Transverse colon (tissue), 4 donors: ENCODE measurements at regions of chr3 and their contacts with region 1.

Region 1: GRCh38 chr3:192802957-192803899 is 75.9 kb upstream of the FGF12 start:
- DNase-seq: no peak
- H3K4me3 ChIP-seq: no peak overlapping the region
- H3K27ac ChIP-seq: no peak overlapping the region
- H3K4me1 ChIP-seq: no peaks in the 10 kb centered on the region
- H3K27me3 ChIP-seq: no peaks in the 10 kb centered on the region
- CTCF ChIP-seq: peak; percentile 34 to 48 (median 41)
- EP300 ChIP-seq: no peak
- POLR2A ChIP-seq: no peak

Region 2: DNA sequence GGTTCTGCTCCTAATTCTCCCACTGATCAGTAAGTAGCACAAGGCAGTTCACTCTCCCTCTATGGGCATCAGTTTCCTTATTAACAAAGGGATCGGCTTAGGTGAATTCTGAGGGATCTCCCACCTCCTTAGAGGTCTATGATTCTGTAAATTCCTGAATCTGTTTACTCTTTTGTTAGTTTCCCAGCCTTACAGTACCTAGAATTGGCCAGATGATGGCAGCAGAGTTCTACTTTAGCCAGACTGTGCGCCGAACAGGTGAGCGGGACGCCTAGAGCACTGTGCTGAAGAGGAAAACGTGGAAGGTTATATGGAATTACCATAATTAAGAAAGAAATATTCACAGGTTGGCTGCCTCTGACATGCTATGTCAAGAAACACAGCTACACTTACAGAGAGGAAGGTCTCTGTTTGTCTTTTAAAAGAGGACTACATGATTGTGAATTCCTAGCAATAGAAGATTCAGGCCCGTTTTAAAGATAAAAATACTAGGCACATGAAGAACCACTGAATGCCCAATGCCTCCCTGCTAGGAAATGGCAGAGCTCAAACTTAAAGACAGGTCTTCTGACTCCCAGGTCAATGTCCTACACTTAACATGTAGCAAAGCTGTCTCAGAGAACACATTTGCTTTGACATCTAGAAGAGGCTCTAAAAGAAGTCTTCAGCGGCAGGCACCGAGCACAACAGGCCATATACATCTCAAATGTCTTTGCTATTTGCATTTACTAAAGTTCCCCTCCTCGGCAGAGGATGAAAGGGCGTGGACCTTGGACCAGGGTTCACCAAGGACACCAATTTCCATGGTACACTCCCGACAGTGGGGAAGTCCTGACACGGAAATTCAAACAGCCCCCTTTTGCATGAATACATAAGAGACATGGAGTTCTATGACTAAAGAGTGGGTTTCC is 335.7 kb before region 1 on chr3:
- in situ Hi-C with region 1: loop called in 1 of 4 experiments (anchors 10 kb)
- intact Hi-C with region 1: no loop called
- DNase-seq: peak; percentile 53
- H3K4me3 ChIP-seq: no peak overlapping the region
- H3K27ac ChIP-seq: no peak overlapping the region
- H3K4me1 ChIP-seq: no peaks in the 10 kb centered on the region
- H3K27me3 ChIP-seq: peaks cover 14% of the 10 kb centered on the region
- CTCF ChIP-seq: peak; percentile 60 to 90 (median 84)
- EP300 ChIP-seq: no peak
- POLR2A ChIP-seq: no peak

Region 3: GRCh38 chr3:192566706-192567290 is 236.4 kb before region 1 on chr3:
- in situ Hi-C with region 1: loop called in 3 of 4 experiments (anchors 5 to 25 kb)
- intact Hi-C with region 1: loop called (anchors 10 kb)
- DNase-seq: peak; percentile 54
- H3K4me3 ChIP-seq: no peak overlapping the region
- H3K27ac ChIP-seq: no peak overlapping the region
- H3K4me1 ChIP-seq: no peaks in the 10 kb centered on the region
- H3K27me3 ChIP-seq: no peaks in the 10 kb centered on the region
- CTCF ChIP-seq: peak; percentile 45 to 67 (median 61)
- EP300 ChIP-seq: no peak
- POLR2A ChIP-seq: no peak

Region 4: DNA sequence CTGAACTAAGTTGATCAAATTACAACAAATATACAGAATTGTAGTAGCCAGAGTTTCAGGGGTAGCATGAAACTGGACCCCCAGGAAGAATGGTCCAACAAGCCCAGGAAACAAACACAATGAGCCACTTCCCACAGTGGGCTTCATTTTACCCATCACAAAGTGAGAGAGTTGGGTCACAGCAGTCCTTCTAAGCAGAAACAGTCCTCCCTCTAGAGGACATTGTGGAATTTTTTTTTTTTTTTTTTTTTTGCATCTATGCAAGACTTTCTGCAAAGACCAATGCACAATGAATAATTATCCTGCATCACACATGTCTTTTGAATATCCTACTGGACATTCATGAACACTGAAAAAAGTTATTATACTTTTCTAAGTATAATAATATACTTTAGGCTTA is 649.1 kb after region 1 on chr3:
- in situ Hi-C with region 1: loop called in 1 of 4 experiments (anchors 25 kb)
- intact Hi-C with region 1: no loop called
- DNase-seq: no peak
- H3K4me3 ChIP-seq: no peak overlapping the region
- H3K27ac ChIP-seq: no peak overlapping the region
- H3K4me1 ChIP-seq: no peaks in the 10 kb centered on the region
- H3K27me3 ChIP-seq: no peaks in the 10 kb centered on the region
- CTCF ChIP-seq: no peak
- EP300 ChIP-seq: no peak
- POLR2A ChIP-seq: no peak